ENCODE measurements at regions of chr6 and their contacts with region 1.

Region 1: DNA sequence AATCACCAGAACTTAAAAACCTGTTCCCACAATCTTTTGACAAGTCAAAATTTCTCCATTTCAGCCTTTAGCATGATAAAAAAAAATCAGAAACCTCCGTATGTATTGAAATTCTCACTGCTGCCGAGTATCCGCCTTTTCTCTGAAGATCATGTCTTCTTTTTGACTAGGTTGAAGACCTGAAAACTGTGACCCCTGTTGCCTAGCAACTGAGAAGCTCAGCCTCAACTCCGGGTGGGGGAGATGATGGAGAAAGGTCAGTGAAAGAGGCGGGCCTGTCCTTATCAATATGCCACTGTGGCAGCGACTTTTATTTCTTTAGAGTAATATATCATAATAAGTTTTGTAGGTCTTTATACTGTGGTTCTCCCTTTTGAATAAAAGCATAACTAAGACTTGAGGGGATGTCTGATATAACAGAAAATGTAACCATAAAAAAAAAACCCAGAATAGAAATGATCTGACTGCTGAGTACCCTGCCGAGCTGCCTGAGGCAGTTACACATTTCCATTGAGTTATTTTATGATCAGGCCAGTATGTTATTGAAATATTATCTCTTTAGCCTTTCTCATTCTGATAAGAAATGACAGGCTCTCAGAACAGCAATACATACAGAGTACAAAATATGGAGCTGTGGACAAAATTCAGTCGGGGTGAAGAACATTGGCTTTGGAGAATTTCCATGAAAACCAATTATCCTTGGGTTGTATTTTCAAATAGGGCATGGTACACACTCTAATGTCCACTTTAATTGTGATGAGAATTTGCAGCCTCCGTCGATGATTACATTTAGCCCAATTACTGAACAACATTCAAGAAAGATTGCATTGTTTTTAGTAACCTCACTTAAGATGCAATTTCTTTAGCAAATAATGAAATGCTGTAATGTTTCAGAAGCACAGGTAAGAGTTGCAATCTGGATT is 136.7 kb upstream of the EEF1E1 start:
- DNase-seq: peak; percentile 49
- H3K4me3 ChIP-seq: no peak overlapping the region
- H3K27ac ChIP-seq: peak overlapping the region in 1 of 2 experiments; percentile 89; a peak in 2 of 4 replicates
- H3K4me1 ChIP-seq: peaks cover 0 to 16% of the 10 kb centered on the region in 2 experiments; a peak in 3 of 4 replicates
- H3K27me3 ChIP-seq: no peaks in the 10 kb centered on the region; the same call in 1 of the 2 replicates
- CTCF ChIP-seq: no peak
- EP300 ChIP-seq: peak in 1 of 2 experiments; percentile 93; a peak in 2 of 4 replicates
- RAD21 ChIP-seq: peak; percentile 26

Region 2: DNA sequence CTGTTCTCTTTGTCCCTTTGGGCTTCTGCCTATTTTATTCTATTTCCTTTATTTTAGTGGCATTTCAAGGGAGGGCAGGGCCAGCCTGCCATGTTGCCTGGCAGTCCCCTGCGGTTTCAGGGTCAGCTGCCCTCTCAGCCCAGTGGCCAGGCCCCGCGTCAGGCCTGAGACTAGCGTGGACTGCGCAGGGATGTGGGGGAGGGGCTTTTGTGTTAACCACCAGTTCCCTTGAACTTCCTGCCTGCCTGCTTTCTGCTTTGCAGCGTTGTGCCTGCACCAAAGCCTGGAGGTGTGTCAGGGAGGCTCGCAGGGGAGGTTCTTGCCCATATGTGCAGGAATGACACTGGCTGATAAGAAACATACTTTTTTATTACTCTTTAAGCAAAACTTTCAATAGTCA is 38.7 kb after region 1 on chr6:
- CTCF ChIA-PET with region 1: interaction called, 7 read pairs
- POLR2A ChIA-PET with region 1: interaction called, 16 read pairs
- DNase-seq: peak; percentile 27
- H3K4me3 ChIP-seq: no peak overlapping the region
- H3K27ac ChIP-seq: peak overlapping the region in 1 of 2 experiments; percentile 72; a peak in 2 of 4 replicates
- H3K4me1 ChIP-seq: peaks cover 0 to 28% of the 10 kb centered on the region in 2 experiments; a peak in 2 of 4 replicates
- H3K27me3 ChIP-seq: no peaks in the 10 kb centered on the region
- CTCF ChIP-seq: no peak
- EP300 ChIP-seq: no peak
- RAD21 ChIP-seq: no peak

Region 3: GRCh38 chr6:8375916-8376315 is 136.9 kb after region 1 on chr6:
- CTCF ChIA-PET with region 1: no interaction called
- POLR2A ChIA-PET with region 1: no interaction called
- DNase-seq: no peak
- H3K4me3 ChIP-seq: no peak overlapping the region
- H3K27ac ChIP-seq: no peak overlapping the region
- H3K4me1 ChIP-seq: no peaks in the 10 kb centered on the region
- H3K27me3 ChIP-seq: no peaks in the 10 kb centered on the region
- CTCF ChIP-seq: no peak
- EP300 ChIP-seq: no peak
- RAD21 ChIP-seq: no peak

Region 4: GRCh38 chr6:8481718-8482117 is 242.7 kb after region 1 on chr6:
- CTCF ChIA-PET with region 1: no interaction called
- POLR2A ChIA-PET with region 1: no interaction called
- DNase-seq: no peak
- H3K4me3 ChIP-seq: no peak overlapping the region
- H3K27ac ChIP-seq: no peak overlapping the region
- H3K4me1 ChIP-seq: no peaks in the 10 kb centered on the region
- H3K27me3 ChIP-seq: no peaks in the 10 kb centered on the region
- CTCF ChIP-seq: peak; percentile 19; the same call in 1 of the 2 replicates
- EP300 ChIP-seq: no peak
- RAD21 ChIP-seq: no peak; the same call in 1 of the 2 replicates

Measured in SK-N-SH (cell line).